ENCODE measurements at regions of chr4 and their contacts with region 1.

Region 1: DNA sequence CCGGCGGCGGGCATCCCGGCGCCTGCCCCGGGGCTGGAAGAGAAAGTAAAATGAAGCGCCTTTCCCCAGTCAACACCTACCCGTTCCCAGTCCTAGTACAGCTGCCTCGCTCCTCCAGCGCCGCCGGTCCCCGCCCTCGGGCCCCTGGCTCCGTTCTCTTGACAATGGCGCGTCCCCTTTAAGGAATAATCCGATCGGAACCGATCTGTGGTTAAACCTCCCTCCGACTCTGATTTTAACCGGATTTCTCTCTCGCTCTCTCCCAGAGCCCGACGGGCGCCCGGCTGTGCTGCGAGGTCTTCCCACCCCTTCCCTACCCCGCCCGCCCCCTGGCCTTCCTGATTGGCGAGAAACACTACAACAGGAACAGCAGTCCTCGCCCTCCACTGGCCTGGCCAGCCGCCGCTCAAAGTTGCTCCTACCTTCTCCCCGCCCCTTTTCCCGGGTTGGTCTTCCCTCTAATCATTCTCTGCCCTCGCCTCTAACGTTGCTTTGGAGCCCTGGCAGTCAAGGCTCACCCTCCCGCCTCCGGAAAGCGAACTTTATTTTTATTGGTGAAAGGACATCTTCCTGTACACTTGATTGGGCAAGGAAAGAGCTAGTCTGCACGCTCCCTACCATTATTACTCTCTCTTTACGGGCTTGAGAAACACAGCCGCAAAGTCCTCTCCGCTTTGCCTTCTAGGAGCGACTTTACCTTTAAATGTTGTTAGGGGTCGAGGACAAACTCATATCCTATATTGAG is at the start of gene FRYL:
- DNase-seq: peak; percentile 100
- total RNA-seq, gene FRYL: 59.6 to 73.2 TPM

Region 2: DNA sequence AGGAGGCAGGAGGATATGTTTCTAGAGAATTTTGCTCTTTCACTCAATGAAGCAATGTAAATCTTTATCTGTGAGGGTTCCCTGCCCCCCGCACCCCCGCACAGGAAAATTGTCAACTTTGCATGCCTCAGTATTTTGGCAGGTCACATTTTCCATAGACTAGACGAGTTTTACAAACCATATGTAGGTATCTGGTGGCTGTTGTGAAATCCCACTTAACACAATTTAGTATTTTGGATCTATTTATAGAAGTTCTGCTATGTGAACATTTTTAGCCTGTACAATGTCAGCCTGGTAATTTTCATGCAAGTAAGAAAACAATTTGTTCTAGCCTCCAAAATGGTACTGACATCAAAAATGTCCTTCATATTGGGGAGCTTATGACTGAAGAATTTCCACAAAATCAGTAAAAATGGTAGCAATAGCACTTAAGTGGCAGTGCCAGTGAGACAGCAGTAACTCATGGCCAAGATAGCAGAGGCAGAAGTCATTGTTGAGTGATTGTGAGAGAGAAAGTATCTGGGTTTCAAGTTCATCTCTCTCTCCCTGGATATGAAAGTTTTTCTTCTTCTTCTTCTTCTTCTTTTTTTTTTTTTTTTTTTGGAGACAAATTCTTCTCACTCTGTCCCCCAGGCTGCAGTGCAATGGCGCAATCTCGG is 12.3 kb after region 1 on chr4:
- intact Hi-C with region 1: loop called in 1 of 2 experiments (anchors 1 kb)
- DNase-seq: no peak

Region 3: DNA sequence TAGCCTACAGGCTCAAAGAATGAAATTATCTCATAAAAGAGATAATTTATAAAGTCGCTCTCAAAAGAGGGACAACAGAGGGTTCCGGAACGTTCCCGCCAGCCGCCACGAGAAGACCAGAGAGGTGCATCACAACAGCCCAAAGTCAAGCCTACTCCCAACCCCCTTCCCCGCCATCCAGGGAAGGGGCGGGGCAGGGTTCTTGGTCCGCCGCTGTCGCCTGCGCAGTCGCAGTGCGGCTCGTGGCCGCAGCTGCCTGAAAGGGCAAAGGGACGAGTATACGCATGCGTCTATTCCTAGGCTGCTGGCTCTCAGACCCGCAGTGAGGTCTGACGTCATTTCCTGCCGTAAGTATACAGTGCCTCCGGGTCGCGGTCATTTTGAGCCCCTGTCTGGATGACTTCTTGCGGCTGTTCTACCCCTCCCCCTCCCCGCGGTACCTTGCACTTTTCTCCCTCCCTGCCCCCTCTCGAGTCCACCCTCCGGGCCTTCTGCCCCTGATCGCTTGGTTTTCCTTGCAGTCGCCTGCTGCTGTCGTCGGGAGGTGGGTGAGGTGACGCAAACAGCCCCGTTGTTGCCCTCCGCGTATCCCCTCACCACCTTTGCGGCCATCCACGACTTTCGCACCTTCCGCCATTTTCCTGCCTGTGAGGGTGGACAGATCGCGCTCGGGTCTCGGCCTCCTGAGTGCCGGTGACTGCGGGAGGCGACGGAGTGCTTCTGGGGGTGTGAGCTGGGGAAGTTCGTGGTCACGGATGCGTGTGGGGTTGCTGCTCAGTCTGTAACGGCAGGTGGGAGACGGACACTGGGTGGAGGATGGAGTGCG is 50.7 kb after region 1 on chr4 and contains the start of gene OCIAD1:
- intact Hi-C with region 1: loop called in 1 of 2 experiments (anchors 5 kb)
- DNase-seq: peak; percentile 98
- total RNA-seq, gene OCIAD1: 80.6 to 90.7 TPM